ENCODE measurements at regions of chr20 and their contacts with region 1.

Region 1: GRCh38 chr20:51610780-51611624 is 68.5 kb upstream of the NFATC2 start:
- DNase-seq: no peak
- ATAC-seq: no peak
- H3K4me3 Mint-ChIP-seq: no peak overlapping the region
- H3K27ac Mint-ChIP-seq: no peak overlapping the region
- H3K4me1 Mint-ChIP-seq: 0 out of 2 replicates have a peak, but pooled peaks cover 5% of the 10 kb centered on the region
- H3K27me3 Mint-ChIP-seq: no peaks in the 10 kb centered on the region
- CTCF ChIP-seq: no peak

Region 2: GRCh38 chr20:51507216-51508036 is 103.6 kb before region 1 on chr20:
- CTCF ChIA-PET with region 1: no interaction called
- POLR2A ChIA-PET with region 1: no interaction called
- DNase-seq: no peak
- ATAC-seq: no peak
- H3K4me3 Mint-ChIP-seq: no peak overlapping the region
- H3K27ac Mint-ChIP-seq: no peak overlapping the region
- H3K4me1 Mint-ChIP-seq: no peaks in the 10 kb centered on the region
- H3K27me3 Mint-ChIP-seq: no peaks in the 10 kb centered on the region
- CTCF ChIP-seq: no peak

Region 3: DNA sequence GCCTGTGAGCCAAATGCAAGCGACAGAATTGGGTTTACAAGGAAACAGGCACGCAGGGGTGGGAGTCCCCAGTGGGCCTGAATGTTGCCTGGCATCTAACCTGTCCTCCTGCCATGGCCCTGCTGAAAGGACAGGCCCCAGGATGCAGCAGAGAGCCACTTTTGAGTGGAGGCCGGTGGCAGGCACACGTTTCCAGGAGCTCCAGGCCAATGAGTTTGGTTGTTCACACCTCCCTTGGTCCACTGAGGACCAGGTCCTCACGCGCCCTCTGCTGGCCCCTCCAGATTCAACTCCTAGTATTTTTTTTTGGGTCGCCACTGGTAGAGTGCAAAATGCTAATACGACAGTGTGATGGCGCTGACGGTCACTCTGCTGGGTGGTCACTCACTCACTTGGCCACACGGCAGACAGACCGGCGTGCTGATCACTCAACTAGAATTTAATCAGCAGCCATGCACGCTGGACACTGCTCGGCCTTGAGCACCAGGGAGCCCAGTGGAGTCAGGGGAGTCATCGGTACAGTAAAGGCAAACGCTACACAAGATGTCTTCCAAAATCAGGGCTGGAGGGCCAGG is 13.2 kb after region 1 on chr20:
- CTCF ChIA-PET with region 1: interaction called, 10 read pairs
- POLR2A ChIA-PET with region 1: no interaction called
- DNase-seq: peak; percentile 84
- ATAC-seq: peak; percentile 92
- H3K4me3 Mint-ChIP-seq: no peak overlapping the region
- H3K27ac Mint-ChIP-seq: peak overlapping the region; percentile 84; the same call in 1 of the 2 replicates
- H3K4me1 Mint-ChIP-seq: peaks cover 9% of the 10 kb centered on the region
- H3K27me3 Mint-ChIP-seq: no peaks in the 10 kb centered on the region
- CTCF ChIP-seq: peak; percentile 76

Region 4: DNA sequence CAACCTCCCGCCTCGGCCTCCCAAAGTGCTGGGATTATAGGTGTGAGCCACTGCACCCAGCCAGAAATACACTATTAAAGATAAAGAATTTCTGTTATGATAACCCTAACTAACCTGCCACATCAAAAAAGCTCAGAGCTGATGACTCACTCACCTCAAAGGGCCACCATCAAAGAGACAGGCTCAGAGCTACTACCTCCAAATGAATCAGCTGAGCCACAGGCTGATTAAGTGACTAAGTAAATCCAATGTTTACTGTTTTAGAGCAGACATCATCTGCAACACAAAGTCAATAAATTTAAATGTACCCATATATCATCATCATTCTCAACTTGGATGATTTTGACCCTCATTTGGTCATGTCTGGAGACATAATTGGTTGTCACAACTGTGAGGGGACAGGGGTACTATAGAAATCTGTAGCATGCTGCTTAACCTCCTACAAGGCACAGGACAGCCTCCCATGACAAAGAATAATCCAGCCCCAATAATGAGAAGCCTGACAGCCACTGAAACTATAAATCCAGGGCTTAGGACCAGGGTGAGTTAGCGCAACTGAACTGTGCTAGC is 50.7 kb after region 1 on chr20:
- CTCF ChIA-PET with region 1: no interaction called
- POLR2A ChIA-PET with region 1: no interaction called
- DNase-seq: no peak
- ATAC-seq: no peak
- H3K4me3 Mint-ChIP-seq: no peak overlapping the region
- H3K27ac Mint-ChIP-seq: peak overlapping the region; percentile 64; the same call in 1 of the 2 replicates
- H3K4me1 Mint-ChIP-seq: peaks cover 32% of the 10 kb centered on the region
- H3K27me3 Mint-ChIP-seq: no peaks in the 10 kb centered on the region
- CTCF ChIP-seq: no peak

Region 5: GRCh38 chr20:51725380-51726203 is 114.6 kb after region 1 on chr20:
- CTCF ChIA-PET with region 1: no interaction called
- POLR2A ChIA-PET with region 1: no interaction called
- DNase-seq: no peak
- ATAC-seq: no peak
- H3K4me3 Mint-ChIP-seq: no peak overlapping the region
- H3K27ac Mint-ChIP-seq: peak overlapping the region; percentile 57
- H3K4me1 Mint-ChIP-seq: no peaks in the 10 kb centered on the region
- H3K27me3 Mint-ChIP-seq: no peaks in the 10 kb centered on the region
- CTCF ChIP-seq: no peak

Measured in WTC11 (cell line).